MCF 10A (cell line): ENCODE measurements at regions of chr7 and their contacts with region 1.

Region 1: GRCh38 chr7:129091484-129092002 is 36.6 kb upstream of the TNPO3 start:
- DNase-seq: peak; percentile 82
- H3K4me3 Mint-ChIP-seq: no peak overlapping the region
- H3K27ac Mint-ChIP-seq: no peak overlapping the region
- H3K4me1 Mint-ChIP-seq: peaks cover 5% of the 10 kb centered on the region
- H3K27me3 Mint-ChIP-seq: peaks cover 10% of the 10 kb centered on the region
- CTCF ChIP-seq: peak; percentile 96

Region 2: DNA sequence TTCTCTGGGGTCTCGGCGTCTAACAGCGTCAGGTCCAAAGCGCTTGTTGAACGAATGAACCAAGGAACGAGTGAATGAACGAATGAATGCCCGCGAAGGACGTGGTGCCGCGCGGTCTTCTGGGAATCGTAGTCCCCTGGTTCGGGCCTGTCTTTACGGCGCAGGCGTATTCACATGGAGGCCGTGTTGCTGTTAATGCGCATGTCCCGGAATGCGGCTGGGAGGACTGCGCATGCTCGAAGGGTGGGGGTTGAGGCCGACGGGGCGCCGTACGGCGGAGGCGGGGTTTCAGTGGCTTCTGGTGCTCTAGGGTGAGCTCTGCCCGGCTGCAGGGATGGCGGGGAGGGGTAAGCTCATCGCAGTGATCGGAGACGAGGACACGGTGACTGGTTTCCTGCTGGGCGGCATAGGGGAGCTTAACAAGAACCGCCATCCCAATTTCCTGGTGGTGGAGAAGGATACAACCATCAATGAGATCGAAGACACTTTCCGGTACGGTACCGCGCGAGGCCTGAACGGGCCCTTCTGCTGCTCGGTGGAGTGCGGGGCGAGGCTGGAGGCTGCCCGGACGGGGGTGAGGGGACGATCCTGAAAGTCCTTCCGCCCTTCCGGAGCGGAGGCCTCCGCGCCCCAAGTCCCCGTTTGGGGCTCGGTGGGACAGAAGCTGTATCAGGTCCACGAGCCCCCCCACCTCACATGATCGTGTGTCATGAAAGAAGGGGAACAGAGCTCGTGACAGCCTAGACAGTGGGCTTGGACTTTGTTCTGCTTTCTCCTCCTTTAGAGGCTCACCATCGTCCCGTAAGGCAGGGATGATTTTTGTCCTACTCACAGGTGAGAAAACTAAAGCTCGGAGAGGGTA is 228.7 kb before region 1 on chr7 and contains the start of gene ATP6V1F:
- CTCF ChIA-PET with region 1: interaction called, 15 read pairs
- POLR2A ChIA-PET with region 1: interaction called, 3 read pairs
- intact Hi-C with region 1: loop called (anchors 1 kb)
- DNase-seq: peak; percentile 98
- H3K4me3 Mint-ChIP-seq: peak within 1 kb of the TSS; percentile 82
- H3K27ac Mint-ChIP-seq: peak within 1 kb of the TSS; percentile 84
- H3K4me1 Mint-ChIP-seq: peaks cover 14% of the 10 kb centered on the region
- H3K27me3 Mint-ChIP-seq: no peaks in the 10 kb centered on the region
- CTCF ChIP-seq: no peak
- total RNA-seq, gene ATP6V1F: 125 and 152 TPM in 2 replicates

Region 3: DNA sequence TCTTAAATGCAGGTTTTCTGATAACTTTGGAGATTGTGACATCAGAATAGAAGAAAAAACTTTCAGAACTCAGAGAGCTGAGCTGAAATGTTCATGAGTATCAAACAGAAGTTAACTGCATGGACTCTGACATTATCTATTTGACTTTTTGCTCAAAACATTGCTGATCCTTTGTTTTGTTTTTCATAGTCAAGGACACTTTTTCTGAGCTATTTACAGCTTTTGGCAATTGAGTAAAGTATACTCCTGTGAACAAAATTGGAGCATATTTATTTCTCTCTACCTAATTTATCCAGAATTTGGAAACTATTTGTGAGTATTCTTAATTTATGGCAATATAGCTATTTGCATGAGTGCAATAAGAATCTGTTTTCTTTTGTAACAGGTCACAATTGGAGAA is 192.2 kb before region 1 on chr7:
- CTCF ChIA-PET with region 1: interaction called, 18 read pairs
- POLR2A ChIA-PET with region 1: no interaction called
- intact Hi-C with region 1: loop called (anchors 1 kb)
- DNase-seq: no peak
- H3K4me3 Mint-ChIP-seq: no peak overlapping the region
- H3K27ac Mint-ChIP-seq: no peak overlapping the region
- H3K4me1 Mint-ChIP-seq: peaks cover 30% of the 10 kb centered on the region
- H3K27me3 Mint-ChIP-seq: no peaks in the 10 kb centered on the region
- CTCF ChIP-seq: no peak

Region 4: DNA sequence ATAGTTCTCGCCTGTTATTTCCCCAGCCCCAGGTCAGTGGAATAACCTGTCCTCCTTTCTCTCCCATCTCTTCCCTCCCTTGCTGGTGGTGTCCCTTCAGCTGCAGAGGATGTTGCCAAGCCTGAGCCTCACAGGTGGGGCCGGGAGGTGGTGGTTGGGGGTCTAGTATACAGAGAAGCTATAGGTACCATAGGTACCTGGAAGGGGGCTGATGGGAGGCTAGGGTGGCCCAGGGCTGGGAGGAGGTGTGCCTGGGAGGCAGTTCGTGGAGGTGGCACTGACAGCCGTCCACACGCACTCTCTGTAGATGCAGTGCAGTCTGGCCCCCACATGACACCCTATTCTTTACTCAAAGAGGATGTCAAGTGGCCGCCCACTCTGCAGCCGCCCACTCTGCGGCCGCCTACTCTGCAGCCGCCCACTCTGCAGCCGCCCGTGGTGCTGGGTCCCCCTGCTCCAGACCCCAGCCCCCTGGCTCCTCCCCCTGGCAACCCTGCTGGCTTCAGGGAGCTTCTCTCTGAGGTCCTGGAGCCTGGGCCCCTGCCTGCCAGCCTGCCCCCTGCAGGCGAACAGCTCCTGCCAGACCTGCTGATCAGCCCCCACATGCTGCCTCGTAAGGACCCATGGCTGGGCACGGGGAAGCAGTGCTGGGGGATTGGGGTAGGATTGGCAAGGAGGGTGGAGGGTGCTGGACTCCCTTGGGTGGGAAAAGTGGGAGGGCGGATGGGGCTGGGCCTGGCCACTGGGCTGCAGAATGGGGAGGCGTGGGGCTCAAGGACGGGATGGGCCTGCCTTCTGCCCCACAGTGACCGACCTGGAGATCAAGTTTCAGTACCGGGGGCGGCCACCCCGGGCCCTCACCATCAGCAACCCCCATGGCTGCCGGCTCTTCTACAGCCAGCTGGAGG is 144.4 kb before region 1 on chr7:
- CTCF ChIA-PET with region 1: interaction called, 10 read pairs
- POLR2A ChIA-PET with region 1: no interaction called
- intact Hi-C with region 1: no loop called
- DNase-seq: no peak
- H3K4me3 Mint-ChIP-seq: no peak overlapping the region
- H3K27ac Mint-ChIP-seq: no peak overlapping the region
- H3K4me1 Mint-ChIP-seq: no peaks in the 10 kb centered on the region
- H3K27me3 Mint-ChIP-seq: no peaks in the 10 kb centered on the region
- CTCF ChIP-seq: no peak

Region 5: GRCh38 chr7:129066290-129067131 is 25.0 kb before region 1 on chr7:
- CTCF ChIA-PET with region 1: interaction called, 22 read pairs
- POLR2A ChIA-PET with region 1: no interaction called
- intact Hi-C with region 1: no loop called
- DNase-seq: peak; percentile 33
- H3K4me3 Mint-ChIP-seq: no peak overlapping the region
- H3K27ac Mint-ChIP-seq: peak overlapping the region; percentile 20
- H3K4me1 Mint-ChIP-seq: peaks cover 9% of the 10 kb centered on the region
- H3K27me3 Mint-ChIP-seq: peaks cover 18% of the 10 kb centered on the region
- CTCF ChIP-seq: no peak

Region 6: DNA sequence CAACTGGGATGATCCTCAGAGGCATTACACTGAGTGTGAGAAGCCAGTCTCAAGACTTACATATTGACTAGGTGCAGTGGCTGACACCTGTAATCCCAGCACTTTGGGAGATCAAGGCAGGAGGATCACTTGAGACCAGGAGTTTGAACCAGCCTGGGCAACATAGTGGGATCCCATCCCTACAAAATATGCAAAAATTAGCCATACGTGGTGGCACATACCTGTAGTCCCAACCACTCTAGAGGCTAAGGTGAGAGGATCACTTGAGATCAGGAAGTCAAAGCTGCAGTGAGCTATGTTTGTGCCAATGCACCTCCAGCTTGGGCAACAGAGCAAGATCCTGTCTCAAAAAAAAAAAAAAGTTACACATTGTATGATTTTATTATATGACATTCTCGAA is 13.1 kb before region 1 on chr7:
- CTCF ChIA-PET with region 1: interaction called, 44 read pairs
- POLR2A ChIA-PET with region 1: interaction called, 5 read pairs
- intact Hi-C with region 1: no loop called
- DNase-seq: no peak
- H3K4me3 Mint-ChIP-seq: no peak overlapping the region
- H3K27ac Mint-ChIP-seq: no peak overlapping the region
- H3K4me1 Mint-ChIP-seq: no peaks in the 10 kb centered on the region
- H3K27me3 Mint-ChIP-seq: peaks cover 11% of the 10 kb centered on the region
- CTCF ChIP-seq: no peak

Region 7: GRCh38 chr7:129118182-129118581 is 26.6 kb after region 1 on chr7:
- CTCF ChIA-PET with region 1: interaction called, 11 read pairs
- POLR2A ChIA-PET with region 1: no interaction called
- intact Hi-C with region 1: no loop called
- DNase-seq: no peak
- H3K4me3 Mint-ChIP-seq: no peak overlapping the region
- H3K27ac Mint-ChIP-seq: no peak overlapping the region
- H3K4me1 Mint-ChIP-seq: no peaks in the 10 kb centered on the region
- H3K27me3 Mint-ChIP-seq: no peaks in the 10 kb centered on the region
- CTCF ChIP-seq: no peak

Region 8: GRCh38 chr7:129134356-129134987 is 42.9 kb after region 1 on chr7:
- CTCF ChIA-PET with region 1: no interaction called
- POLR2A ChIA-PET with region 1: no interaction called
- intact Hi-C with region 1: no loop called
- DNase-seq: no peak
- H3K4me3 Mint-ChIP-seq: no peak overlapping the region
- H3K27ac Mint-ChIP-seq: peak overlapping the region; percentile 3
- H3K4me1 Mint-ChIP-seq: peaks cover 8% of the 10 kb centered on the region
- H3K27me3 Mint-ChIP-seq: peaks cover 14% of the 10 kb centered on the region
- CTCF ChIP-seq: no peak

Region 9: DNA sequence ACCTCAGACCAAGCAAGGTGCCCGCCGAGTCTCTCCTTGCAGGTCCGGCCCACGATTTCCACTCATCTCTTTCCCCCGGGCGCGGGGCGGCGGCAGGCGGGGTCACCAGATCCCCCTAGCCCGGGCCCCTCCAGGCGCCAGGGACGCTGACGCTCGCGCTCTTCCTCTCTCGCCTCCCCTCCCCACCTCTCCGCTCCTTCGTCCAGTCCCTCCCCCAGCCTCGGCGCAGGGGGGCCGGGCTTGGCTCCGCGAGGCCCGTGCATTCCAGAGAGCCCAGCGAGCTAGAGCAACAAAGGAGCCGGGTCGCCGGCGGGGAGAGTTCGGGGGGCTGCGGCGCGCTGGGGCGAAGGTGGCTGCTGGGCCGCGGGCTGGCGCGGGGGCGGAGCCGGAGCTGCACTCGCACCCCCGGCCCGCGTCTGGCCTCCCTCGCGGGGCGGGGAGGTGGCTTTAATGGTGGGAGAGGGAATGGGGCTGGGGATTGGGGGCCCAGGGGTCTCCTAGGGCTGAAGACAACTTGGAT is 96.9 kb after region 1 on chr7 and contains the start of gene SMO:
- CTCF ChIA-PET with region 1: no interaction called
- POLR2A ChIA-PET with region 1: no interaction called
- intact Hi-C with region 1: no loop called
- DNase-seq: no peak
- H3K4me3 Mint-ChIP-seq: no peak within 1 kb of the TSS
- H3K27ac Mint-ChIP-seq: no peak within 1 kb of the TSS
- H3K4me1 Mint-ChIP-seq: no peaks in the 10 kb centered on the region
- H3K27me3 Mint-ChIP-seq: peaks cover 52% of the 10 kb centered on the region
- CTCF ChIP-seq: no peak
- total RNA-seq, gene SMO: not detected in 2 replicates